Esophagus squamous epithelium (tissue), 5 donors: ENCODE measurements at regions of chr12 and their contacts with region 1.

Region 1: GRCh38 chr12:115632308-115632707 is 645.2 kb downstream of the MED13L start:
- DNase-seq: no peak
- H3K4me3 ChIP-seq: no peak overlapping the region
- H3K27ac ChIP-seq: no peak overlapping the region
- H3K4me1 ChIP-seq: no peaks in the 10 kb centered on the region
- H3K27me3 ChIP-seq: peaks cover 0 to 4% (median 0%) of the 10 kb centered on the region in 4 donors
- CTCF ChIP-seq: peak in 5 of 6 experiments; percentile 18 to 52 (median 31)
- POLR2A ChIP-seq: no peak

Region 2: DNA sequence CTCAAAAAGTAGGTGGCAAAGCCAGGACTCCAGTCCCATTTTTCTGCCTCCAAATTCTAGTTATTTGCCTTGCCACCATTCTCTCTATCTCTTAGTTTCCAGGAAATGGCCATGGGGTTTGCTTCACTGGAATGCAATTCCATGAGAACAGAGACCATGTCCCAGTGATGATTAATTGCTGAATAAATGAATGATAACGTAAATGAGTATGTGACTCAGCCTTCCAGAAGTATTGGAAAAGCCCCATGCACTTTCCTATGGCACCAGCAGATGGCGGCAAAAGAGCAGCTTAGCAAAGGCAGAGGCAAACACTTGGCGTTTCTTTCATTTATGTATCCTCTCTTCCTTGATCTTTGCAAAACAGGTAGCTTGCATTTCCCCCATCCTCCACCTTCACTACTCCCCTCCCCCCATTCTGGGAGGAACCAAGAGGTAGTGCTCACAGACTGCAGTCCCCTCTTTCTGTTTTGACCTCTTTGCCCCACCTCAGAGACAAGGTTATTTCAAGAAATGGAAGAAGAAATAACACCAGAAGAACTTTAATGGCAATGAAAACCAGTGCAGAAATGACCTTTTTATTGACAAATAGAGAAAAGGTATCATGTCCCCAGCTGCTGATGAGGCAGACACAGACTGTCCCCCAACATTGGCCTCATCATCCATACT is 969.7 kb before region 1 on chr12:
- intact Hi-C with region 1: loop called (anchors 10 kb)
- DNase-seq: no peak
- H3K4me3 ChIP-seq: no peak overlapping the region
- H3K27ac ChIP-seq: no peak overlapping the region
- H3K4me1 ChIP-seq: peaks cover 0 to 33% (median 0%) of the 10 kb centered on the region in 3 donors
- H3K27me3 ChIP-seq: peaks cover 5 to 55% (median 24%) of the 10 kb centered on the region in 4 donors
- CTCF ChIP-seq: peak; percentile 63 to 96 (median 94)
- POLR2A ChIP-seq: no peak

Region 3: DNA sequence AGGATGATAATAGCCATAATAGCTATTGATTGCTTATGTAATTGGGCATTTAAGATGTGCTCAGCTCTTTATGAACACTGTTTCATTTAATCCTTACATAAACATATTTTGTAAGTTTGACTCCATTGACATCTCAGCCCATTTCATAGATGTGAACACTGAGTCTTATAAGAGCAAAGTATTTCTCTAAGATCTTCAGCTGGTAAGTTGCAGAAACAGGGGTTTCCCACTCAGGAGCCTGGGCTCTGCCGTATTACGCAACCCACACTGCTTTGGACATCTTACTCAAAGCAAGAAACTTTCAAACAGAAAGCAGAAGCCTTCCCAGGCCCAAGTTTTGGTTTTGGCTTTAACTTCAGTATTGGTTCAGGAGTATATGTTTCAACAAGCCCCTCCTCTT is 59.9 kb before region 1 on chr12:
- intact Hi-C with region 1: no loop called
- DNase-seq: no peak
- H3K4me3 ChIP-seq: no peak overlapping the region
- H3K27ac ChIP-seq: no peak overlapping the region
- H3K4me1 ChIP-seq: no peaks in the 10 kb centered on the region
- H3K27me3 ChIP-seq: no peaks in the 10 kb centered on the region
- CTCF ChIP-seq: no peak
- POLR2A ChIP-seq: no peak